Heart left ventricle (tissue), 16 donors: ENCODE measurements at regions of chr2 and their contacts with region 1.

Region 1: DNA sequence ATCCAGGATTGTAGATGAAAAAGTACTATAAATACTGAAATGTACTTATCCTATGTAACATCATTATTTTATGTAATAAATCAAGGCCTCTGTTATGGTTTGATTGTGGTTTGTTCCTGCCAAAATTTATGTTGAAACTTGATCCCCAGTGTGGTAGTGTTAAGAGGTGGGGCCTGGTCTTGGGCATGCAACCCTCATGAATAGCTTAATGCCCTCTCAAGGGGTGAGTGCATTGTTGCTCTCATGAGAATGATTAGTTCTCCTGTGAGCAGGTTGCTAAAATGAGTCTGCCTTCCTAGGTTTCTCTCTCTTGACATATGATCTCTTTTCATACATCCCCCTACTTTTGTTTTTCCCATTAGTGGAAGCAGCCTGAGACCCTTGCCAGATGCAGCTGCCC is 915.4 kb downstream of the TSN start:
- DNase-seq: no peak
- ATAC-seq: no peak
- H3K4me3 ChIP-seq: no peak overlapping the region
- H3K27ac ChIP-seq: no peak overlapping the region
- H3K4me1 ChIP-seq: no peaks in the 10 kb centered on the region
- H3K27me3 ChIP-seq: no peaks in the 10 kb centered on the region
- CTCF ChIP-seq: no peak
- POLR2A ChIP-seq: no peak

Region 2: DNA sequence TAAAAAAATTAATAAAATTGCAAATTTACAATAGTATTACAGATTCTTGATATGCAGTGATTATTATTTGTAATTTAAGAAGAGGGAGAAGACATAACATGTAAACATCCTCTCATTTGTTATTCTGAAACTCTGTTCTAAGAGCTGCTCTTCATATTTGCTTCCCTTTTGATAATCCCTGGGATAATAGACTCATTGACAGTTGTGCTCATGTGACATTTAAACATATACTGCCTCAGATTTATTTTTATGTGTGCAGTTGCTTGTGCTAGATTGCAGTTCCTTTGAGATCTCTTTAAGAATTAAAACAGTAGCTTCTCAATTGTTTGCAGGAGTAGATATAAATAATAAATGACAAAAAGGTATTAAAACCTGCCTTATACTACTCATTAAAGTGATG is 749.1 kb after region 1 on chr2:
- intact Hi-C with region 1: loop called in 1 of 10 experiments (anchors 5 kb)
- DNase-seq: no peak
- ATAC-seq: no peak
- H3K4me3 ChIP-seq: no peak overlapping the region
- H3K27ac ChIP-seq: no peak overlapping the region
- H3K4me1 ChIP-seq: no peaks in the 10 kb centered on the region
- H3K27me3 ChIP-seq: no peaks in the 10 kb centered on the region
- CTCF ChIP-seq: no peak
- POLR2A ChIP-seq: no peak